ENCODE measurements at regions of chr7 and their contacts with region 1.

Region 1: DNA sequence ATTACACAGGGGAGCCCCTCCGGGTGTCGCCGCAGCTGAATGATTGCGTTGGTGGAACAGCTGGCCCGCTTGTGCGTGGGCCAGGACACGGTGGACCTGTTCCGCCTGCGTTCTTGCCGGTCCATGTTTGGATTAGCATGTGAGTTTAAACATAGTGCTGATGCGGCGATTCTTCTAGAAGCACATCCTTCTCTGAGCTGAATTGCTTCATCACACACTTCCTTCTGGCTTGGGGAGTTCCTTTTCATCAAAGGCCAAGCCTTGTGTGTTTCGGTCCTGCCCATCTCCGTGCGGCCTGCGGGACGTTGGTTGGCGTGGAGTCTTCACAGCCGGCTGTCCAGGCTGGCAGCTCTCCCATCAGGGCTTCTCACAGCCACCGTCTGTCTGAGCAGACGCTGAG is 45.5 kb upstream of the SLC29A4 start:
- DNase-seq: no peak
- H3K4me3 Mint-ChIP-seq: no peak overlapping the region
- H3K27ac Mint-ChIP-seq: no peak overlapping the region
- H3K4me1 Mint-ChIP-seq: peaks cover 25% of the 10 kb centered on the region
- H3K27me3 Mint-ChIP-seq: peaks cover 11% of the 10 kb centered on the region
- CTCF ChIP-seq: no peak

Region 2: GRCh38 chr7:4428526-4428925 is 808.8 kb before region 1 on chr7:
- CTCF ChIA-PET with region 1: no interaction called
- intact Hi-C with region 1: no loop called
- DNase-seq: no peak
- H3K4me3 Mint-ChIP-seq: no peak overlapping the region
- H3K27ac Mint-ChIP-seq: no peak overlapping the region
- H3K4me1 Mint-ChIP-seq: no peaks in the 10 kb centered on the region
- H3K27me3 Mint-ChIP-seq: peaks cover 39% of the 10 kb centered on the region
- CTCF ChIP-seq: no peak

Region 3: GRCh38 chr7:5284304-5285281 is 47.3 kb after region 1 on chr7:
- CTCF ChIA-PET with region 1: interaction called, 13 read pairs
- intact Hi-C with region 1: no loop called
- DNase-seq: peak; percentile 77
- H3K4me3 Mint-ChIP-seq: peak overlapping the region; percentile 59
- H3K27ac Mint-ChIP-seq: no peak overlapping the region
- H3K4me1 Mint-ChIP-seq: peaks cover 12% of the 10 kb centered on the region
- H3K27me3 Mint-ChIP-seq: peaks cover 37% of the 10 kb centered on the region
- CTCF ChIP-seq: peak; percentile 30

Region 4: GRCh38 chr7:5450549-5451372 is 213.5 kb after region 1 on chr7:
- CTCF ChIA-PET with region 1: interaction called, 12 read pairs
- intact Hi-C with region 1: loop called (anchors 1 kb)
- DNase-seq: peak; percentile 61
- H3K4me3 Mint-ChIP-seq: no peak overlapping the region
- H3K27ac Mint-ChIP-seq: peak overlapping the region; percentile 61
- H3K4me1 Mint-ChIP-seq: peaks cover 9% of the 10 kb centered on the region
- H3K27me3 Mint-ChIP-seq: peaks cover 8% of the 10 kb centered on the region
- CTCF ChIP-seq: peak; percentile 91